CD4-positive, alpha-beta memory T cell (primary cell): ENCODE measurements at regions of chr12 and their contacts with region 1.

Region 1: DNA sequence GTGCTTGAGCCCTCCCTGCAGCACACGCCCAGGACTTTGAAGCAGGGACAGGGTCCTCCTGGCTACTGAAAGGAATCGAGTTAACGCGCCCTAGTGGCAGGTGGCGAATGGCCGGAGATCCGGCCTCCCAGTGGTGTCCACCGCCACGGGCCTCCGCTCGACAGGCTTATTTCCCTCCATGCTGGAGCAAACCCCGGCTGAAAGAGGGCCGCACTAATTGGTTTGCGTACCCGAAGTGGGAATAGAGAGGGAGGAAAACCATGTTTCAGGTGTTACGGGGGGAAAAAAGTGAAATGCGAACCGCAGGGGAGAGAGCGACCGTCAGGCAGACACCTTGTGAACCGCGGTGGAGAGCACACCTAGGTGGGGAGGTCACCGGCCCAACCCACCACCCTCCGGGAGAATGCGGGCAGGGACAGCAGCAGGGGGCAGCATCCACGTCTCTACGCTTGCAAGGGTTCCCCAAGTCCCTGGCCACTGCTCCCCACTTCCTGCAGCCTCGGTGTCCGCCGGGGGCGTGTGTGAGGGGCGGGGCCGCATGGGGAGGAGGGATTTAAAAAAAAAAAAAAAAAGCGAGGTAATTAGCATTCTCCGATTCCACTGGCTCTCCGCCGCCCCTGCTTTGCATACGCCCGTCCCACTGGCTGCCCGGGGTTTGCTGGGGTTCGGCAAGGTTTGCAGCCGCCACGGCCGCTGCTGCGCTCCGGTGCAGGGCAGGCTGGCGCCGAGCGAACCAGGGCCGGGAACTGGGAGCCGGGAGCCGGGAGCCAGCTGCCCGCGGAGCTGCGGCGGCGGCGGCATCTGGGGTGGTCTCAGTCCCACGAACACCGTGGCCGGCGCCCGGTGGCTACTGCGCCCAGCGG is 224.6 kb upstream of the CRY1 start:
- DNase-seq: peak; percentile 81 to 93 (median 84)
- H3K4me3 ChIP-seq: peak overlapping the region; percentile 73 to 84
- H3K4me3 Mint-ChIP-seq: peak overlapping the region; percentile 83 to 93 (median 86)
- H3K27ac ChIP-seq: peak overlapping the region; percentile 46
- H3K27ac Mint-ChIP-seq: peak overlapping the region; percentile 67 to 98 (median 75)
- H3K4me1 ChIP-seq: peaks cover 31% of the 10 kb centered on the region
- H3K4me1 Mint-ChIP-seq: peaks cover 18 to 37% (median 30%) of the 10 kb centered on the region in 4 donors
- H3K27me3 ChIP-seq: no peaks in the 10 kb centered on the region
- H3K27me3 Mint-ChIP-seq: peaks cover 0 to 5% of the 10 kb centered on the region in 2 donors

Region 2: DNA sequence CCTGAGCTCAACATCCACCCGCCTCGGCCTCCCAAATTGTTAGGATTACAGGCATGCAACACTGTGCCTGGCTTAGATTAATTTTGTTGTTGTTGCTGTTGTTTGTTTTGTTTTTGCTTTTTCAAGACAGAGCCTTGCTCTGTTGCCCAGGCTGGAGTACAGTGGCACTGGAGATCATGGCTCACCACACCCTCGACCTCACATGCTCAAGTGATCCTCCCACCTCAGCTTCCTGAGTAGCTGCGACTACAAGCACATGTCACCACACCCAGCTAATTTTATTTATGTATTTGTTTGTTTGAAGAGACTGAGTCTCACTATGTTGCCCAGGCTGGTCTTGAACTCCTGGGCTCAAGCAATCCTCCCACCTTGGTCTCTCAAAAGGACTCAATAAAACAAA is 251.3 kb before region 1 on chr12:
- CTCF ChIA-PET with region 1: no interaction called
- POLR2A ChIA-PET with region 1: no interaction called
- intact Hi-C with region 1: no loop called
- DNase-seq: no peak
- H3K4me3 ChIP-seq: no peak overlapping the region
- H3K4me3 Mint-ChIP-seq: peak overlapping the region in 3 of 8 donors; percentile 8 to 61 (median 38)
- H3K27ac ChIP-seq: no peak overlapping the region
- H3K27ac Mint-ChIP-seq: peak overlapping the region in 3 of 7 donors; percentile 29 to 62 (median 53)
- H3K4me1 ChIP-seq: peaks cover 8% of the 10 kb centered on the region
- H3K4me1 Mint-ChIP-seq: peaks cover 13 to 22% (median 17%) of the 10 kb centered on the region in 4 donors
- H3K27me3 ChIP-seq: no peaks in the 10 kb centered on the region
- H3K27me3 Mint-ChIP-seq: no peaks in the 10 kb centered on the region

Region 3: DNA sequence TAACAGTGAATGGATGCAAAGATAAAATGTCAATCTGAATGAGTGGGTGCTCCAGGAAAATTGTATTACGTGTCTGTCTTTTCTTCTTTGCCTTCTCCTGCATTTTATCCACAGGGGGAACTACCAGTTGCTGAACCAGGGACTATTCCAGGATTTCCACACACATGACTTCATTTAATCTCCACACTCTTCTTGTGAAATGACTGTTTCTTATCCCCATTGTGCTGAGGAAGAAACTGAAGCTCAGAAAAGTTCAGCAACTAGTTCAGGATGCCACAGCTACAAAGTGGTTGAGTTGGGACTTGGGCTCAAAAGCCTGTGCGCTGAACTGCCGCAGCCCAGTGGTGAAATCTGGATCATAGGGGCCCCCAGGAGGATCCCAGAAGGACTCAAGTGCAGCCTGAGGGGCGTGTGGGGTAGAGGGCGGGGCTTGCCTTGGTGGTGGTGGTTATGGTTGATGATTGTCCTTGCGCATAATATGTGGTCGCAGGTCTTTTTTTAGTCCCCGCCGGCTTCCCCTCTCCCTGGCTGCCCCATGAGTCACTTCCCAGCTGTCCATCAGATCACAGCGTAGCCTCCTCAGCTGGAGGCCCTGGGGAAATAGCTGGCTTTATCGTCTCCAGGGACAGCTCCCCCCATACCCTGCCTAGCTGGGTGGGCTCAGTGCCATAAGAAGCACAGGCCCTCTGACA is 10.6 kb after region 1 on chr12:
- CTCF ChIA-PET with region 1: interaction called, 3 read pairs
- POLR2A ChIA-PET with region 1: interaction called, 18 read pairs
- intact Hi-C with region 1: no loop called
- DNase-seq: no peak
- H3K4me3 ChIP-seq: no peak overlapping the region
- H3K4me3 Mint-ChIP-seq: no peak overlapping the region
- H3K27ac ChIP-seq: no peak overlapping the region
- H3K27ac Mint-ChIP-seq: peak overlapping the region in 2 of 7 donors; percentile 21 to 31
- H3K4me1 ChIP-seq: peaks cover 21% of the 10 kb centered on the region
- H3K4me1 Mint-ChIP-seq: peaks cover 24 to 86% (median 60%) of the 10 kb centered on the region in 4 donors
- H3K27me3 ChIP-seq: no peaks in the 10 kb centered on the region
- H3K27me3 Mint-ChIP-seq: no peaks in the 10 kb centered on the region

Region 4: GRCh38 chr12:107372229-107372658 is 54.3 kb after region 1 on chr12:
- CTCF ChIA-PET with region 1: interaction called, 23 read pairs
- POLR2A ChIA-PET with region 1: interaction called, 150 read pairs
- intact Hi-C with region 1: loop called (anchors 1 kb)
- DNase-seq: peak; percentile 64 to 78 (median 70)
- H3K4me3 ChIP-seq: peak overlapping the region; percentile 25 to 27
- H3K4me3 Mint-ChIP-seq: peak overlapping the region; percentile 57 to 89 (median 78)
- H3K27ac ChIP-seq: peak overlapping the region; percentile 62
- H3K27ac Mint-ChIP-seq: peak overlapping the region; percentile 88 to 94 (median 91)
- H3K4me1 ChIP-seq: peaks cover 77% of the 10 kb centered on the region
- H3K4me1 Mint-ChIP-seq: peaks cover 60 to 90% (median 77%) of the 10 kb centered on the region in 4 donors
- H3K27me3 ChIP-seq: no peaks in the 10 kb centered on the region
- H3K27me3 Mint-ChIP-seq: no peaks in the 10 kb centered on the region

Region 5: DNA sequence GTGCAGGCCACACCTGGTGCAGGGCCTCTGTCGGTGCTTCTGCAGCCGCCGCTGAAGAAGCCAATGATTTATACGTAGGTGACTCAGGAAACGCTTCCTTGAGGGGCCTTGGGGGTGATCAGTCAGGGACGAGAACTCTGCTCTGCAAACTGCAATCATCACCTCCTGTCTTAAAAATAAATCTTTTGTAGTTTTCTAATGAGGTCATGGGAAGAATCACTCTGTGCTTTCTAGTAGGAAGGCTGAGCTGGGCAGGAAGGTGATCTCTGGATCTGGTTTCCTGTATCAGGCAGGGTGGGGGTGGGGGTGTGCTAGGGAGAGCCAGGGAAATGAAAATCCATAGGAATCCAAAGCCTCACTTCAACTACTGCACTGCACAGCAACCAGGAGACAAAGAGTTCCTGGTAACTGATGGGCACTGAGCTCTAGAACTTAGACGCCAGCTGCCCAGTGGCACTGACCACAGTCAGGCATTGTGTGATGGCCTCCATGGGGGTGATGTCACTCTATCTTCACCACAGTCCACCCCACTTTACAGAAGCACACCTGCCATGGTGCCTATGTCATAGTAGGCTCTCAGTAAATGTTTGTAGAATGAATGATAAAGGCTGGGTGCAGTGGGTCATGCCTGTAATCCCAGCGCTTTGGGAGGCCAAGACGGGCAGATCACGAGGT is 75.2 kb after region 1 on chr12:
- CTCF ChIA-PET with region 1: interaction called, 3 read pairs
- POLR2A ChIA-PET with region 1: interaction called, 19 read pairs
- intact Hi-C with region 1: no loop called
- DNase-seq: no peak
- H3K4me3 ChIP-seq: no peak overlapping the region
- H3K4me3 Mint-ChIP-seq: peak overlapping the region in 4 of 8 donors; percentile 31 to 72 (median 53)
- H3K27ac ChIP-seq: no peak overlapping the region
- H3K27ac Mint-ChIP-seq: peak overlapping the region in 6 of 7 donors; percentile 38 to 80 (median 72)
- H3K4me1 ChIP-seq: peaks cover 45% of the 10 kb centered on the region
- H3K4me1 Mint-ChIP-seq: peaks cover 41 to 82% (median 60%) of the 10 kb centered on the region in 4 donors
- H3K27me3 ChIP-seq: no peaks in the 10 kb centered on the region
- H3K27me3 Mint-ChIP-seq: no peaks in the 10 kb centered on the region

Region 6: GRCh38 chr12:107402041-107403022 is 84.3 kb after region 1 on chr12:
- CTCF ChIA-PET with region 1: interaction called, 60 read pairs
- POLR2A ChIA-PET with region 1: interaction called, 17 read pairs
- intact Hi-C with region 1: loop called (anchors 1 kb)
- DNase-seq: peak in 4 of 5 donors; percentile 49 to 58 (median 52)
- H3K4me3 ChIP-seq: no peak overlapping the region
- H3K4me3 Mint-ChIP-seq: peak overlapping the region in 1 of 8 donors; percentile 27
- H3K27ac ChIP-seq: no peak overlapping the region
- H3K27ac Mint-ChIP-seq: peak overlapping the region in 4 of 7 donors; percentile 51 to 88 (median 71)
- H3K4me1 ChIP-seq: peaks cover 11% of the 10 kb centered on the region
- H3K4me1 Mint-ChIP-seq: peaks cover 6 to 30% (median 14%) of the 10 kb centered on the region in 4 donors
- H3K27me3 ChIP-seq: no peaks in the 10 kb centered on the region
- H3K27me3 Mint-ChIP-seq: no peaks in the 10 kb centered on the region

Region 7: DNA sequence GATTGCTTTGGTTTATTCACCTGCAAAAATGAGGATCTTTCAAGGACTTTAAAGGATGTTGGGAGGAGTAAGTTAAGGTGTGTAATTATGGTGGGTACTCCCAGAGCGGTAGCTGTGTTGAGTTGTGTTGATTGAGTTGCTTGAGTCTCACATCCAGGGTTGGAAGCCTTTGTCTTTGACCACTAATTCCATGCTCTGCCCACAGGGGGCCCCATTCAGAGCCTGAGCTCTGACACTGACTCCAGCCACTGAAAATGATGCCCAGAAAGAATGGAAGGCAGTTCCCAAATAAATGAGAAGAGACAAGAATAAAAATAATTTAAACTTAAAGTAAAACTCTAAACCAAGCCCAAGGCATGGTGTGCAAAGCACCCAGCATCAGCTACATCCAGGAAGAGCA is 130.2 kb after region 1 on chr12:
- CTCF ChIA-PET with region 1: no interaction called
- POLR2A ChIA-PET with region 1: no interaction called
- intact Hi-C with region 1: no loop called
- DNase-seq: no peak
- H3K4me3 ChIP-seq: no peak overlapping the region
- H3K4me3 Mint-ChIP-seq: no peak overlapping the region
- H3K27ac ChIP-seq: no peak overlapping the region
- H3K27ac Mint-ChIP-seq: no peak overlapping the region
- H3K4me1 ChIP-seq: no peaks in the 10 kb centered on the region
- H3K4me1 Mint-ChIP-seq: peaks cover 7 to 24% (median 9%) of the 10 kb centered on the region in 4 donors
- H3K27me3 ChIP-seq: no peaks in the 10 kb centered on the region
- H3K27me3 Mint-ChIP-seq: no peaks in the 10 kb centered on the region

Region 8: GRCh38 chr12:107607464-107608392 is 289.7 kb after region 1 on chr12:
- CTCF ChIA-PET with region 1: no interaction called
- POLR2A ChIA-PET with region 1: no interaction called
- intact Hi-C with region 1: loop called (anchors 1 kb)
- DNase-seq: peak; percentile 67 to 75 (median 70)
- H3K4me3 ChIP-seq: no peak overlapping the region
- H3K4me3 Mint-ChIP-seq: no peak overlapping the region
- H3K27ac ChIP-seq: no peak overlapping the region
- H3K27ac Mint-ChIP-seq: peak overlapping the region in 1 of 7 donors; percentile 35
- H3K4me1 ChIP-seq: no peaks in the 10 kb centered on the region
- H3K4me1 Mint-ChIP-seq: peaks cover 0 to 3% (median 0%) of the 10 kb centered on the region in 4 donors
- H3K27me3 ChIP-seq: no peaks in the 10 kb centered on the region
- H3K27me3 Mint-ChIP-seq: no peaks in the 10 kb centered on the region

Region 9: DNA sequence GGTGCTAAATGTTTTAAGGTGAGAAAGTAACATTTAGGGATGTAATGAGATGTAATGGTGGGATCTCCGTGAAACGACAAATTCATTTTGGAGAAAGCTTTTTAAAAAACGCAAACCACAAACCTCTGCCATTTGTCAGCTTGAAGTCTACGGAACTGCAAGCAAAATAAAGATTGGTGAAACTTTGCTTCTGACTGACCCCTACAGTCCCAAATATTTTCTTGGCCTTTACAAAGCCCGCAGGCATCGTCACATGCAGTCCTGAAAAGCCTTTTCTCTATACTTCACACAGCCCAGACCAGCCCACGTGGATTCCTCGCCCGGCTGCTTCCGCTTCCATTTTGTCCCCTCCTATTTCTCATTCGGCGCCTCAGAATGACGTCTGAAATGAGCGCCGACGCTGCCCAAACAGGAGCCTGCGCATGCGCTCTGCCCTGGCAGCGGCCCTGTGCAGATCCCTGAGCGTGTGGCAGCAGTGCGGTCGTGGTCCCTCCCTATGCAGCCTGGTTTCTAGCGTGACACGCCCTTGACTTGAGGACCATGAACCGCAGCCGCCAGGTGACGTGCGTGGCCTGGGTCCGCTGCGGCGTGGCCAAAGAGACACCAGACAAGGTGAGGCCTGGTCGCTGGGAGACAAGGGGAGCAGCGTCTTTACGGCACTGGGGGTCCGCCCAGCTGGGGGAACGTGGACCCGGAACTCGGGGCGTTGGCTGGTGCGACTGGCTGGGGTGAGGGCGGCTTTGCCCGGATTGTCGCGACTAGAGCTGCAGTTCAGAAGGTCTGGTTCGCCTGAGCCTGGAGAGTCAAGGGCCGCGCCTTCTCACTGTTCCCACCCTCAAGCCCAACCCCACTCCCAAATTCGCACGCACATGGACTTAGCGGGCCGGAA is 367.6 kb after region 1 on chr12 and contains the start of gene PWP1:
- CTCF ChIA-PET with region 1: no interaction called
- POLR2A ChIA-PET with region 1: interaction called, 3 read pairs
- intact Hi-C with region 1: loop called (anchors 5 kb)
- DNase-seq: peak; percentile 94 to 97 (median 95)
- H3K4me3 ChIP-seq: peak within 1 kb of the TSS; percentile 94 to 98
- H3K4me3 Mint-ChIP-seq: peak within 1 kb of the TSS; percentile 96 to 99 (median 97)
- H3K27ac ChIP-seq: peak within 1 kb of the TSS; percentile 78
- H3K27ac Mint-ChIP-seq: peak within 1 kb of the TSS; percentile 94 to 100 (median 98)
- H3K4me1 ChIP-seq: peaks cover 25% of the 10 kb centered on the region
- H3K4me1 Mint-ChIP-seq: peaks cover 14 to 37% (median 26%) of the 10 kb centered on the region in 4 donors
- H3K27me3 ChIP-seq: no peaks in the 10 kb centered on the region
- H3K27me3 Mint-ChIP-seq: no peaks in the 10 kb centered on the region
- total RNA-seq, gene PWP1: 24.3 to 25.6 TPM